IMR-90 (cell line): ENCODE measurements at regions of chr10 and their contacts with region 1.

Region 1: DNA sequence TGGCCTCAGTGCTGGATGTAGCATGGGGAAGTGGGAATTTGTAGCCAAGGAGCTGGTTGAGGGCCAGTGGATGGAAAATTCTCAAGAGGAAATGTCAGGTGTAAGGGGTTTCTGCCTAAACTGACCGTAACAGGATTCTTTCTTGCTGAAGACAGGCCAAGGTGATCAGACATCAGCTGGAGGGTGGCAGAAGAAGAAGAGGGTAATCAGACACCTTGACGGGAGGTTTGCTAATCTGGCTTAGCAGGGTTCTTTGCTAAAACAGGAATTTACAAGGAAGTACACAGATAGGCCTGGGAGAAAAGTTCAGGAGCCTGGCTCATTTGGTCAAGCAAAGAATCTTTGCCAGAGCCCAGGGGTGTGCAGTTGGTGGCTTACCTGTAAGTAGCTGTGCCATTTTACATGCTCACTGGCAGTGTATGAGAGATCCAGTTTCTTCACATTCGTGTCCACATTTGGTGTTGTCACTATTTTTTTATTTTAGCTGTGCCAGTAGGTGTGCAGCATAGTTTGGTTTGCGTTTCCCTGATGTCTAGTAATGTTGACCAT is 73.7 kb downstream of the BMPR1A start:
- DNase-seq: no peak
- ATAC-seq: no peak
- H3K4me3 ChIP-seq: no peak overlapping the region
- H3K27ac ChIP-seq: no peak overlapping the region
- H3K4me1 ChIP-seq: peaks cover 4% of the 10 kb centered on the region
- H3K27me3 ChIP-seq: no peaks in the 10 kb centered on the region
- CTCF ChIP-seq: no peak
- POLR2A ChIP-seq: no peak
- RAD21 ChIP-seq: no peak

Region 2: GRCh38 chr10:86775056-86775869 is 54.9 kb before region 1 on chr10:
- CTCF ChIA-PET with region 1: no interaction called
- POLR2A ChIA-PET with region 1: no interaction called
- dilution Hi-C with region 1: no loop called
- in situ Hi-C with region 1: no loop called
- intact Hi-C with region 1: loop called (anchors 5 kb)
- DNase-seq: peak; percentile 33
- ATAC-seq: peak; percentile 53
- H3K4me3 ChIP-seq: no peak overlapping the region
- H3K27ac ChIP-seq: peak overlapping the region; percentile 36; the same call in 1 of the 2 replicates
- H3K4me1 ChIP-seq: peaks cover 14% of the 10 kb centered on the region
- H3K27me3 ChIP-seq: no peaks in the 10 kb centered on the region
- CTCF ChIP-seq: no peak
- POLR2A ChIP-seq: no peak
- RAD21 ChIP-seq: no peak

Region 3: GRCh38 chr10:86846088-86846487 is 16.0 kb after region 1 on chr10:
- CTCF ChIA-PET with region 1: no interaction called
- POLR2A ChIA-PET with region 1: no interaction called
- dilution Hi-C with region 1: no loop called
- in situ Hi-C with region 1: no loop called
- intact Hi-C with region 1: loop called (anchors 2 kb)
- DNase-seq: no peak
- ATAC-seq: no peak
- H3K4me3 ChIP-seq: no peak overlapping the region
- H3K27ac ChIP-seq: no peak overlapping the region
- H3K4me1 ChIP-seq: no peaks in the 10 kb centered on the region
- H3K27me3 ChIP-seq: no peaks in the 10 kb centered on the region
- CTCF ChIP-seq: no peak
- POLR2A ChIP-seq: no peak
- RAD21 ChIP-seq: no peak